Dorsolateral prefrontal cortex (tissue), 120 donors: ENCODE measurements at regions of chr4 and their contacts with region 1.

Region 1: DNA sequence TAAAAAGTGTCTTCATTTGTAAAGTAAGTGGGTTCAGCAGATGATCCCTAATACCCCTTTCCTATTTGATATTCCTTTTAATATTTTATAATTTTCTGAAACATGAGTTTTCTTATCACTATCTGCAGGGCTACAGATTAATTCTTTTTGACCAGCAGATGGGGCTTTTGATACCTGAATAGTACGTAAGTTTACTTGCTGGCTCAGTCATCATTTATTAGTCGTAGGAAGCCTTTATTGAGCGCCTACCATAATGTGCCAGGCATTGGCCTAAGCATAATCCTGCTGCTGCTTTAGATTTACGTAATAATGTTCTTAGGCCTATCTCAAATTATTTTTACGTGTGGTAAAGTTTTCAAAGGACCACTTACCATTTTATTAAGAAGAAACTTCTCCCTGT is 33.1 kb downstream of the OSTC start:
- DNase-seq: no peak
- H3K4me3 ChIP-seq: no peak overlapping the region
- H3K27ac ChIP-seq: no peak overlapping the region
- H3K27me3 ChIP-seq: no peaks in the 10 kb centered on the region
- CTCF ChIP-seq: peak in 47 of 56 donors; percentile 13 to 70 (median 39)

Region 2: DNA sequence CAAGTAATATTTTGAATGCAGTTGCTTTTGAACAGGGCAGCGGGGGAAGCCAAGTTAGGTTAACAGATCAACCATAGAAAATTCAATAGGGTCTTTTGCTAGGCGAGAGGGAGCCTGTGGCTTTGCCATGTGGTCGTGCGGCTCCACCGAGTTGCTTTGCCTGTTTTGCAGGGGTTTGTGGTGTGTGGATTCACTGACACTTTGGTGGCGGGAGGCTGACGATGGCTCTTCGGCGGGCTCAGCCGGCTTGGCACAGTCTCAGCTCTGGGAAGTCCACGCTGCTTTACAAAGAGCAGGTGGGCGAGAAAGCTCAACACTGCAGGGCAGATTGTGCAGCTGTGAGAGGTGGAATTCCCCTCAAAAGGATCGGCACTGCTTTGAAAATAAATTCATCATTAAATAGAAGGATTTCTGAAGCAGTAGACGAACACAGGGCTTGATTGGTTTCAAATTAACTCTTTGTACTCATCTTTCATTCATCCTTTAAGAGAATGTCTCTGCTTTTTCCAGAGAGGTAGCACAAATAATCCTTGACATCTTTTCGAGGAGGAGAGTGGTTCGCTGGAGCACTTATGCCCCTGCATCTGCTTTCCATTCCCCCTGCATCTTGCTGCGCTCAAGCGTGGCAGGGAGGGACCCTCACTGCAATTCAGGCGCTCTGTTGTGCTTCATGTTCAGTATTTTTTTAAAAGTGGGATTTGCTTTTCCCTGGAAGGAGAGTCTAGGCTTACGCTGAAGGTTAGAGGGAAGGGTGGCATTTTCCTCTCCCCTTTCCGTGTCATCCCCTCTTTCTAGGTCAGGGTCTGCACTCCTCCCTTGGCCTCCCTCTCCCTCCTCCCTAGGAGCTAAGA is 313.0 kb before region 1 on chr4:
- intact Hi-C with region 1: no loop called
- DNase-seq: no peak
- H3K4me3 ChIP-seq: peak overlapping the region in 26 of 59 donors; percentile 2 to 46 (median 28)
- H3K27ac ChIP-seq: no peak overlapping the region
- H3K27me3 ChIP-seq: peaks cover 0 to 58% (median 23%) of the 10 kb centered on the region in 45 donors
- CTCF ChIP-seq: no peak

Region 3: DNA sequence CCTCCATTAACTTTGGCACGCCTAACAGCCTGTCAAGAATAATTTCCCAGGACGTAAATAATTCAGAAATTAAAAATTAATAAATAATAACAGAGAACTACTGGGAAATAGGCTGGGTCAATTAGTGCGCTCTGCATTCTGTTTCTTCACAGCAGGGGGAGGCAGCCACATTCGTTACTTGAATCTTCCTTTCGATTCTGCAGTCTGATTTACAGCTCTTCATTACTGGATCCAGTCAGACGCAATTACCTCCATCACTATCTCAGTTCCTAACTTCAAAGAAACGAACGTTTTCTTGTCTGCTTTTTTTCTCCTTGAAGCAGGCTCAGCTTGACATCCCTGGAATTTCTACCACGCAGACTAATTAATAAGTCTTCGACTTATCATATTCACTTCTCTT is 72.1 kb before region 1 on chr4:
- intact Hi-C with region 1: no loop called
- DNase-seq: peak in 1 of 10 donors; percentile 19
- H3K4me3 ChIP-seq: peak overlapping the region in 58 of 59 donors; percentile 12 to 73 (median 49)
- H3K27ac ChIP-seq: no peak overlapping the region
- H3K27me3 ChIP-seq: no peaks in the 10 kb centered on the region
- CTCF ChIP-seq: peak in 40 of 56 donors; percentile 13 to 61 (median 36)

Region 4: DNA sequence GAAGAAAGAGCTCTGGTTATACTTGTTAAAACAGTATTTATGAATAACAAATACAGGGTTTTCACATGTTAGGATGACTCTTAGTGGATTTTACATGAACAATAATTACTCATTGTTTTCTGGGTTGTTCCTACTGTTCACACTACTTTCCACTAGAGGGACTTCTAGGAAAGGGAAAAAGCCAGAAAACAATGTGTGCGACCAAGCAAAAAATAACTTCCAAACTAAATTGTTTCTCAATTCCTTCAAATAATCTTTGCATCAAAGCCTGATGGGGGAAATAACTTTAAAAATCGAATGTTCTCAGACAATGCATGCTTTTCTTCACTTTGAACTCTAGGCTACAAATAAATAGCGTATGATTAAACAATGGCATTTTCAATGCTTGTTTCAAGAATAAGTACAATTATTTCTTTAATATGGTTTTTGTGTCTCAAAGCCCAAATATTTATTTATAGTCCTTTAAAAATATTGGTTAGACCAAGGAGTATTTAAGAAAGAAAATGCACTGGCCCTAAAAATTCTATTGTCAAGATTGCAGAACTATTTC is 151.4 kb after region 1 on chr4:
- intact Hi-C with region 1: loop called in 1 of 2 experiments (anchors 10 kb)
- DNase-seq: no peak
- H3K4me3 ChIP-seq: no peak overlapping the region
- H3K27ac ChIP-seq: no peak overlapping the region
- H3K27me3 ChIP-seq: peaks cover 0 to 4% (median 0%) of the 10 kb centered on the region in 45 donors
- CTCF ChIP-seq: peak; percentile 43 to 87 (median 74)

Region 5: DNA sequence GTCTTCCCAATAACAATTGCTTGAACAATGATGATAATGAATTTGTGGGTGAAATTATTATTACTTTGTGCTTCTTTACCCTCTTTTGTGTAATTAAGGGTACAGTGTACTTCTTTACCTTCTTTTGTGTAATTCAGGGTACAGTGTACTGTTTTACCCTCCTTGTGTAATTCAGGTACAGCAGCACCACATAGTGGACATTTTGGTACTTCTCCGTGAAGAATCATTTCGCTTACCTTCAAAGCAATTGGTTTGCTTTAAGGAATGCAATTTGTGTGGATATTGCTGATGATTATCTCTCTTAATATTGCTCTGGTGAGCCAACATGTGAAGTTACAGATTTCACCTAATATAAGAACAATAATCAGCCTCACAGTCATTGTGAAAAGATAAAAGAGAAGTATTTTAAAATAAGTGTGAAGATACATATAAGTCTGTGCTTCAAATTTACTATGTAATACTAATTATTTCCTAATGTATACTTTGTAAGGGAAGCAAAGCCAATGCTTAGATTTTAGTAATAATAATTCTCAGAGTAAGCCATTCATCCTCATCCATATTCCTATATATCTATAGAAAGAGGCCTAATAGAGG is 723.0 kb after region 1 on chr4:
- intact Hi-C with region 1: loop called in 1 of 2 experiments (anchors 10 kb)
- DNase-seq: peak in 1 of 10 donors; percentile 25
- H3K4me3 ChIP-seq: no peak overlapping the region
- H3K27ac ChIP-seq: no peak overlapping the region
- H3K27me3 ChIP-seq: no peaks in the 10 kb centered on the region
- CTCF ChIP-seq: peak in 55 of 56 donors; percentile 41 to 83 (median 66)